Activated B cell treated with CpG ODN at 0.5 μM for 24 hours (primary cell): ENCODE measurements at regions of chr15 and their contacts with region 1.

Region 1: GRCh38 chr15:75842722-75843551 is at the start of gene UBE2Q2:
- DNase-seq: peak; percentile 65
- ATAC-seq: peak; percentile 62
- H3K4me3 Mint-ChIP-seq: peak within 1 kb of the TSS; percentile 94
- H3K27ac Mint-ChIP-seq: peak within 1 kb of the TSS; percentile 93
- H3K4me1 Mint-ChIP-seq: peaks cover 35% of the 10 kb centered on the region
- H3K27me3 Mint-ChIP-seq: no peaks in the 10 kb centered on the region
- CTCF ChIP-seq: no peak
- total RNA-seq, gene UBE2Q2: 16.9 and 23.2 TPM in 2 replicates

Region 2: GRCh38 chr15:75738647-75739331 is 104.1 kb before region 1 on chr15:
- CTCF ChIA-PET with region 1: no interaction called
- POLR2A ChIA-PET with region 1: interaction called, 3 read pairs
- intact Hi-C with region 1: loop called (anchors 1 kb)
- DNase-seq: peak; percentile 95
- ATAC-seq: peak; percentile 98
- H3K4me3 Mint-ChIP-seq: peak overlapping the region; percentile 82
- H3K27ac Mint-ChIP-seq: peak overlapping the region; percentile 65
- H3K4me1 Mint-ChIP-seq: peaks cover 15% of the 10 kb centered on the region
- H3K27me3 Mint-ChIP-seq: peaks cover 7% of the 10 kb centered on the region
- CTCF ChIP-seq: no peak

Region 3: GRCh38 chr15:75869446-75869845 is 26.5 kb after region 1 on chr15:
- CTCF ChIA-PET with region 1: no interaction called
- POLR2A ChIA-PET with region 1: interaction called, 5 read pairs
- intact Hi-C with region 1: loop called (anchors 2 kb)
- DNase-seq: no peak
- ATAC-seq: no peak
- H3K4me3 Mint-ChIP-seq: peak overlapping the region; percentile 38
- H3K27ac Mint-ChIP-seq: peak overlapping the region; percentile 62
- H3K4me1 Mint-ChIP-seq: peaks cover 41% of the 10 kb centered on the region
- H3K27me3 Mint-ChIP-seq: no peaks in the 10 kb centered on the region
- CTCF ChIP-seq: no peak

Region 4: DNA sequence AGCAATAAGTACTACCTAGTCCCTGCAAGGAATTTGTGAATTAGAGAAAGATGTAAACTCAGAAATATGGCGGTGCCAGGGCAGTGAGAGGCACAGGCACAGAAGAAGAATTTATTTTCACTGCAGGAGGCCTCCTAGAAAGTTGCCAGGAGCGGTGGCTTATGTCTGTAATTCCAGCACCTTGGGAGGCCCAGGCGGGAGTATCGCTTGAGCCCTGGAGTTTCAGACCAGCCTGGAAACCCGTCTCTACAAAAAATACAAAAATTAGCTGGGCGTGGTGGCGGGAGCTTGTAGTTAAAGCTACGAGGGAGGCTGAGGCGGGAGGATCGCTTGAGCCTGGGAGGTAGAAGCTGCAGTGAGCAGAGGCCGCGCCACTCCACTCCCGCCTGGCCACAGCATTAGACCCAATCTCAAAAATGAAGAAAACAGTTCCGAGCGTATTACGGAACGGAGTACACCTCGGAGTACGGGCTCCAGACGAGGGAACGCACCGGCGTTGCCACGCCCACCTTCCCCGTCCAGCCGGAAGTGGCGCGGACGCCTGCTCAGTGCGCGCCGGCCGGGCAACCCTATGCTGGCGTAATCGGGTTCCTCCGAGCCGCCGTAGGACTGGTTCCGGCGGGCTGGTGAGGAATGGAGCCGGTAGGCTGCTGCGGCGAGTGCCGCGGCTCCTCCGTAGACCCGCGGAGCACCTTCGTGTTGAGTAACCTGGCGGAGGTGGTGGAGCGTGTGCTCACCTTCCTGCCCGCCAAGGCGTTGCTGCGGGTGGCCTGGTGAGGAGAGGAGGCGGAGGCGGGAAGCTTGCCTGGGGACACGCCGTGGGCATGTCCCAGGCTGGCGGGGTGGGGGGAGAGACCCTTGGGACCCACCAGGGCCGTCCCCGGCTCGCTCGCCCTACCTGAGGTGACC is 60.6 kb after region 1 on chr15 and contains the start of gene FBXO22:
- CTCF ChIA-PET with region 1: no interaction called
- POLR2A ChIA-PET with region 1: interaction called, 5 read pairs
- intact Hi-C with region 1: loop called (anchors 1 kb)
- DNase-seq: peak; percentile 84
- ATAC-seq: peak; percentile 95
- H3K4me3 Mint-ChIP-seq: peak within 1 kb of the TSS; percentile 99
- H3K27ac Mint-ChIP-seq: peak within 1 kb of the TSS; percentile 96
- H3K4me1 Mint-ChIP-seq: peaks cover 26% of the 10 kb centered on the region
- H3K27me3 Mint-ChIP-seq: no peaks in the 10 kb centered on the region
- CTCF ChIP-seq: no peak
- total RNA-seq, gene FBXO22: 19.6 and 24.4 TPM in 2 replicates